CD8-positive, alpha-beta T cell (primary cell): ENCODE measurements at regions of chr10 and their contacts with region 1.

Region 1: GRCh38 chr10:48782386-48782785 is 97.7 kb downstream of the WDFY4 start:
- DNase-seq: no peak
- ATAC-seq: no peak
- H3K4me3 ChIP-seq: no peak overlapping the region
- H3K4me3 Mint-ChIP-seq: no peak overlapping the region
- H3K27ac ChIP-seq: no peak overlapping the region
- H3K27ac Mint-ChIP-seq: no peak overlapping the region
- H3K4me1 ChIP-seq: no peaks in the 10 kb centered on the region
- H3K4me1 Mint-ChIP-seq: no peaks in the 10 kb centered on the region
- H3K27me3 ChIP-seq: no peaks in the 10 kb centered on the region
- H3K27me3 Mint-ChIP-seq: no peaks in the 10 kb centered on the region
- CTCF ChIP-seq: no peak

Region 2: GRCh38 chr10:48708144-48708543 is 74.2 kb before region 1 on chr10:
- CTCF ChIA-PET with region 1: no interaction called
- POLR2A ChIA-PET with region 1: no interaction called
- intact Hi-C with region 1: no loop called
- DNase-seq: no peak
- ATAC-seq: no peak
- H3K4me3 ChIP-seq: no peak overlapping the region
- H3K4me3 Mint-ChIP-seq: no peak overlapping the region
- H3K27ac ChIP-seq: no peak overlapping the region
- H3K27ac Mint-ChIP-seq: no peak overlapping the region
- H3K4me1 ChIP-seq: no peaks in the 10 kb centered on the region
- H3K4me1 Mint-ChIP-seq: no peaks in the 10 kb centered on the region
- H3K27me3 ChIP-seq: no peaks in the 10 kb centered on the region
- H3K27me3 Mint-ChIP-seq: peaks cover 4% of the 10 kb centered on the region
- CTCF ChIP-seq: no peak

Region 3: DNA sequence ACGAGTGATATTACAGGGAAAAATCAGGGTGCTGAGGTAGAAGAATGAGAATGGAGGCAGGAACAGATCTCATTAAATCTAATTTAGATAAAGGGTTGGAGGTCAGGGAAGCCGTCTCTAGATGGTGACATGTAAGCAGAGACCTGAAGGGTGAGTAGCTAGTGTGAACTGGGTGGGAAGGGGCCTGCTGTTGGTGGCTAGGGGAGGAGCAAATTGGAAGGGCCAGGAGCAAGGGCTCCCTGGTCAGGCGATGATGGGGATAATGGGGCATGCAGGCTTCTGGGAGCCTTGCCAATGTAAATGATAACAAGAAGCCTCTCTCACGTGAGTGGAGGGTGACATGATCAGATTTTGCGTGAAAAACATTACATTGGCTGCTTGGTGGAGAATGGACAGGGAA is 21.4 kb before region 1 on chr10:
- CTCF ChIA-PET with region 1: no interaction called
- POLR2A ChIA-PET with region 1: no interaction called
- intact Hi-C with region 1: loop called in 1 of 2 experiments (anchors 1 kb)
- DNase-seq: no peak
- ATAC-seq: no peak
- H3K4me3 ChIP-seq: no peak overlapping the region
- H3K4me3 Mint-ChIP-seq: no peak overlapping the region
- H3K27ac ChIP-seq: no peak overlapping the region
- H3K27ac Mint-ChIP-seq: no peak overlapping the region
- H3K4me1 ChIP-seq: no peaks in the 10 kb centered on the region
- H3K4me1 Mint-ChIP-seq: no peaks in the 10 kb centered on the region
- H3K27me3 ChIP-seq: no peaks in the 10 kb centered on the region
- H3K27me3 Mint-ChIP-seq: peaks cover 21% of the 10 kb centered on the region
- CTCF ChIP-seq: no peak